ENCODE measurements at regions of chr17 and their contacts with region 1.

Region 1: GRCh38 chr17:78013683-78014467 is 55.4 kb downstream of the TNRC6C start:
- DNase-seq: peak; percentile 71
- H3K4me3 ChIP-seq: no peak overlapping the region
- H3K27ac ChIP-seq: peak overlapping the region in 1 of 2 experiments; percentile 50; a peak in 2 of 4 replicates
- H3K4me1 ChIP-seq: peaks cover 0 to 8% of the 10 kb centered on the region in 2 experiments; a peak in 1 of 4 replicates
- H3K27me3 ChIP-seq: no peaks in the 10 kb centered on the region
- CTCF ChIP-seq: peak; percentile 99
- EP300 ChIP-seq: no peak
- RAD21 ChIP-seq: peak; percentile 97

Region 2: GRCh38 chr17:77528516-77529327 is 485.2 kb before region 1 on chr17:
- CTCF ChIA-PET with region 1: interaction called, 22 read pairs
- POLR2A ChIA-PET with region 1: no interaction called
- DNase-seq: peak; percentile 95
- H3K4me3 ChIP-seq: peak overlapping the region; percentile 43 to 44; a peak in 3 of 4 replicates
- H3K27ac ChIP-seq: no peak overlapping the region
- H3K4me1 ChIP-seq: peaks cover 0 to 13% of the 10 kb centered on the region in 2 experiments; a peak in 1 of 4 replicates
- H3K27me3 ChIP-seq: peaks cover 38% of the 10 kb centered on the region; the same call in 1 of the 2 replicates
- CTCF ChIP-seq: no peak
- EP300 ChIP-seq: no peak
- RAD21 ChIP-seq: no peak

Region 3: GRCh38 chr17:77734341-77735080 is 279.4 kb before region 1 on chr17:
- CTCF ChIA-PET with region 1: interaction called, 26 read pairs
- POLR2A ChIA-PET with region 1: no interaction called
- DNase-seq: peak; percentile 99
- H3K4me3 ChIP-seq: peak overlapping the region in 1 of 2 experiments; percentile 15; a peak in 2 of 4 replicates
- H3K27ac ChIP-seq: peak overlapping the region in 1 of 2 experiments; percentile 93; a peak in 2 of 4 replicates
- H3K4me1 ChIP-seq: peaks cover 12 to 35% of the 10 kb centered on the region in 2 experiments; a peak in 3 of 4 replicates
- H3K27me3 ChIP-seq: no peaks in the 10 kb centered on the region
- CTCF ChIP-seq: no peak
- EP300 ChIP-seq: peak in 1 of 2 experiments; percentile 76; a peak in 2 of 4 replicates
- RAD21 ChIP-seq: peak; percentile 59

Region 4: GRCh38 chr17:77881545-77881944 is 132.3 kb before region 1 on chr17:
- CTCF ChIA-PET with region 1: interaction called, 21 read pairs
- POLR2A ChIA-PET with region 1: no interaction called
- DNase-seq: peak; percentile 86
- H3K4me3 ChIP-seq: no peak overlapping the region
- H3K27ac ChIP-seq: peak overlapping the region; percentile 31 to 100; a peak in 3 of 4 replicates
- H3K4me1 ChIP-seq: peaks cover 14 to 67% of the 10 kb centered on the region in 2 experiments
- H3K27me3 ChIP-seq: 0 out of 2 replicates have a peak, but pooled peaks cover 6% of the 10 kb centered on the region
- CTCF ChIP-seq: no peak
- EP300 ChIP-seq: peak in 1 of 2 experiments; percentile 75; a peak in 2 of 4 replicates
- RAD21 ChIP-seq: peak; percentile 50

Region 5: DNA sequence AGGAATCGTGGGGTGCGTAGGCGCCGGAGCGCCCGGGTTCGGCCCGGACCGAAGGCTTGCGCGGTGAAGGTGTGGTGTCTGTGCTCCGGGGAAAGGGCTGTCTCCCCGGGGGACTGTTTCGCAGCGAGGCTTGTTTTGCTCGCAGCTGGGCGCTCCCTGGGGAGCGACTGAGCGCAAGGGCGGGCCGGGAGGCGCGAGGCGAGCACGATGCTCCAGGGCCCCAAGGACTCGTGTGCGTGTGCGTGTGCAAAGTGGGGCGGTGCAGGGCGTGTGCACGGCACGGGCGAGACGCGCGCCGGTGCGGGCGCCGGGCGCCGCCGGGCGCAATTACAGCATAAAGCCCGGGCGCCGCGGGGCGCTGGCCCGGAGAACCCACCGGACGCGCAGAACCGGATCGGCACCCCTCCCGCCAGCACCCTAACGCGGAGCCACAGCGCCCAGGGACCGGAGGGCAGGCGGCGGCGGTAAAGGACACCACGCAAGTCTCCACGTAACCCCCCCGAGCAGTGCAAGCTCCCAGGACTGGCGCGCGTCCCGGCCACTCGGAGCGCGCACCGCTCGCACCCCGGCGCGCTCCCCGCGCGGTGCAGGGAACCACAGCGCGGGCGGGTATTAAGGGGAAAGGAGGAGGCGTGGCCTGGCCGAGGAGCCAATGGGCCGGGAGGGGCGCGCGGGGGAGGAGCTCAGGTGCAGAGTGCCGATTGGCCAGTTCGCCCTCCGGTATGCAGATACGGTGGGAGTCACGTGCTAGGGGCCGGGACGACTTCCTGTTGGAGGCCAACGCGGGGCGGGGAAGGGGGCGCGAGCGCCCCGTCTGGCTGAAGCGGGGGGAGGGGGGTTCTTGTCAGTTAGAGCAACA is 55.8 kb before region 1 on chr17 and contains the start of gene TNRC6C:
- CTCF ChIA-PET with region 1: interaction called, 31 read pairs
- POLR2A ChIA-PET with region 1: interaction called, 9 read pairs
- DNase-seq: peak; percentile 100
- H3K4me3 ChIP-seq: peak within 1 kb of the TSS; percentile 80 to 86
- H3K27ac ChIP-seq: peak within 1 kb of the TSS in 1 of 2 experiments; percentile 92; a peak in 2 of 4 replicates
- H3K4me1 ChIP-seq: peaks cover 0 to 35% of the 10 kb centered on the region in 2 experiments; a peak in 3 of 4 replicates
- H3K27me3 ChIP-seq: peaks cover 42% of the 10 kb centered on the region; the same call in 1 of the 2 replicates
- CTCF ChIP-seq: no peak
- EP300 ChIP-seq: no peak; a peak in 1 of 4 replicates
- RAD21 ChIP-seq: peak; percentile 22; the same call in 1 of the 2 replicates
- polyA plus RNA-seq, gene TNRC6C: 1.6 and 2.2 TPM in 2 replicates

Region 6: GRCh38 chr17:78026381-78026780 is 12.5 kb after region 1 on chr17:
- CTCF ChIA-PET with region 1: interaction called, 47 read pairs
- POLR2A ChIA-PET with region 1: no interaction called
- DNase-seq: no peak
- H3K4me3 ChIP-seq: no peak overlapping the region
- H3K27ac ChIP-seq: no peak overlapping the region
- H3K4me1 ChIP-seq: peaks cover 0 to under 1% of the 10 kb centered on the region in 2 experiments; a peak in 2 of 4 replicates
- H3K27me3 ChIP-seq: no peaks in the 10 kb centered on the region
- CTCF ChIP-seq: no peak
- EP300 ChIP-seq: no peak
- RAD21 ChIP-seq: no peak

Measured in SK-N-SH (cell line).